Common myeloid progenitor, CD34-positive (primary cell): ENCODE measurements at regions of chr9 and their contacts with region 1.

Region 1: GRCh38 chr9:112326194-112326593 is 7.2 kb downstream of the PTBP3 start:
- DNase-seq: no peak
- H3K4me3 ChIP-seq: peak overlapping the region in 1 of 7 experiments; percentile 4
- H3K27ac ChIP-seq: no peak overlapping the region
- H3K4me1 ChIP-seq: peaks cover 10 to 41% (median 20%) of the 10 kb centered on the region in 4 experiments
- H3K27me3 ChIP-seq: no peaks in the 10 kb centered on the region

Region 2: GRCh38 chr9:112308588-112308987 is 17.6 kb before region 1 on chr9:
- CTCF ChIA-PET with region 1: interaction called, 10 read pairs
- POLR2A ChIA-PET with region 1: interaction called, 3 read pairs
- DNase-seq: no peak
- H3K4me3 ChIP-seq: no peak overlapping the region
- H3K27ac ChIP-seq: no peak overlapping the region
- H3K4me1 ChIP-seq: peaks cover 0 to 11% (median 3%) of the 10 kb centered on the region in 4 experiments
- H3K27me3 ChIP-seq: no peaks in the 10 kb centered on the region

Region 3: GRCh38 chr9:112384728-112385127 is 58.5 kb after region 1 on chr9:
- CTCF ChIA-PET with region 1: no interaction called
- POLR2A ChIA-PET with region 1: no interaction called
- DNase-seq: peak; percentile 44 to 86 (median 78)
- H3K4me3 ChIP-seq: no peak overlapping the region
- H3K27ac ChIP-seq: no peak overlapping the region
- H3K4me1 ChIP-seq: peaks cover 4 to 27% (median 15%) of the 10 kb centered on the region in 4 experiments
- H3K27me3 ChIP-seq: no peaks in the 10 kb centered on the region

Region 4: DNA sequence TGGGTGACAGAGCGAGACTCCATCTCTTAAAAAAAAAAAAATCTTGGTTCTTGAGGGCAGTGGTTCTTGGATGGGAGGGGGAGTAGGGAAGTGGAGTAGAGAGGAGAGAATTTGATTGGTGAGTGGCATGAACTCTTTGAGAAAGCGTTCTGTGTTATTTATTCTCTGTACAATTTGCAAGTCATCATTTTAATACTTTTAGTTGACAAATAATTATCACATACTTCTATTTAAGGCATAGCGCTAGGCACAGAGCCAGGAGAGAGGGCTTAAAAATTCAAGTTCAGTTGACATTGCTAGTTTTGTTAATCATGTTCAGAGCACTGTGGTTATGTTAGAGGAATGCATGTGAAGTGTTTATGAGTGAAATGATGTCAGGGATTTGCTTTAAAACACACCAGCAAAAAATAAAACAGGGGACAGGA is 78.3 kb after region 1 on chr9:
- CTCF ChIA-PET with region 1: no interaction called
- POLR2A ChIA-PET with region 1: no interaction called
- DNase-seq: no peak
- H3K4me3 ChIP-seq: no peak overlapping the region
- H3K27ac ChIP-seq: no peak overlapping the region
- H3K4me1 ChIP-seq: no peaks in the 10 kb centered on the region
- H3K27me3 ChIP-seq: no peaks in the 10 kb centered on the region